AG04449 (cell line): ENCODE measurements at regions of chr1 and their contacts with region 1.

Region 1: GRCh38 chr1:90045853-90046563 is 51.1 kb downstream of the ZNF326 start:
- DNase-seq: no peak
- H3K4me3 ChIP-seq: no peak overlapping the region
- CTCF ChIP-seq: peak; percentile 58

Region 2: DNA sequence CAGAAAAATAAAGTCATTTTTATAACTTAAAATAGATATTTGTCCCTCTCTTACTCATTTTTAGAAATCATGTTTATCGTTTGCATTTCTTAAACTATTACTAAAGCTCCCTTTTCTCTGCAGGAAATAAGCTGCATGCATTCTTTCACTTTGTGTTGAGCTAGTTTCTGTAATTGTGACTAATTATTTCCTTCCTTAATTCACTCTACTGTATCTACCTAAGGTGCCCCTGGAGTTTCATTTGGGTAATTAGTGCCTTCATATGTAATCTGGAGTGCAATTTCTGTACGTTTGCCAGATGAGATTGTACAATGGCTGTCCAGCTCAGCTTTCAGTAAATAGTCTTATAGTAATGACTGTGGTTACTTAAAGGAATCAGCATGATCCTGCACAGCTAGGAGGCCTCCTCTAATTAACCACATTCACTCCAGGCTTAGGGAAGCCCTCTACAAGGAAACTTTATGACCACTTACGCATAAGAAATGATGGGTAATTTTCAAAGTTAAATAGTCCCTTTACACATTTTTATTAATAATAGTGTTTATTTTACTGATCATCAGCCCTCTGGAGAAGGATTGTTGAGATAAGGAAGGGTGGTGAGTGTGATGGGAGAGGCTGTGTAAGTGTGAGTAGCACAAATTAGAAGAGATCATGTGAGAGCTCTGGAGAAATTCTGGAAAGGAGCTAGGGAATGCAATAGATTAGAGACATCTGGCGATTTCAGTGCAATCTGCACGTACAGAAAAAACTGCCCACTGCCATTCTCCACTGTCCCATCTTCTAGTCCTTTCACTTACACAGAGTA is 326.3 kb before region 1 on chr1:
- CTCF ChIA-PET with region 1: no interaction called
- POLR2A ChIA-PET with region 1: no interaction called
- DNase-seq: peak; percentile 24
- H3K4me3 ChIP-seq: peak overlapping the region; percentile 12; the same call in 1 of the 2 replicates
- CTCF ChIP-seq: no peak

Region 3: DNA sequence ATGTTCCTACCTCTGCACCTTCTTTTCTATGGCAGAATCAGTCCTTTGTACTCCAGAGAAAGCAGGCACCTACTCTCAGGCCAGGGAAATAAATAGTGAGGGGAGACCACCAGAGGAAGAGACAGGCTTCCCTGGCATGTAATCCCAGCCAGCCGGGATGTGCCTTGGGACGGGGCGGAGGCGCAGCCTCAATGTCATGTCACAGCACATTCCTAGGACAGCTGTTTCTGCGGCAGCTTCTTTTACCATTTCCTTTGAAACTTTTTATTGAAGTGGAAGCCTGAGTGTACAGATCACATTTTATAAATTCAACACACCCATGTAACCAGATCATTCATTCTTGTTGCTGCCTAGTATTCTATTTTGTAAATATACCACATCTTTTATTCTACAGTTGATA is 119.0 kb before region 1 on chr1:
- CTCF ChIA-PET with region 1: no interaction called
- POLR2A ChIA-PET with region 1: no interaction called
- DNase-seq: no peak
- H3K4me3 ChIP-seq: no peak overlapping the region
- CTCF ChIP-seq: no peak

Region 4: GRCh38 chr1:90027281-90027680 is 18.7 kb before region 1 on chr1:
- CTCF ChIA-PET with region 1: interaction called, 22 read pairs
- POLR2A ChIA-PET with region 1: interaction called, 3 read pairs
- DNase-seq: no peak
- H3K4me3 ChIP-seq: no peak overlapping the region
- CTCF ChIP-seq: no peak

Region 5: DNA sequence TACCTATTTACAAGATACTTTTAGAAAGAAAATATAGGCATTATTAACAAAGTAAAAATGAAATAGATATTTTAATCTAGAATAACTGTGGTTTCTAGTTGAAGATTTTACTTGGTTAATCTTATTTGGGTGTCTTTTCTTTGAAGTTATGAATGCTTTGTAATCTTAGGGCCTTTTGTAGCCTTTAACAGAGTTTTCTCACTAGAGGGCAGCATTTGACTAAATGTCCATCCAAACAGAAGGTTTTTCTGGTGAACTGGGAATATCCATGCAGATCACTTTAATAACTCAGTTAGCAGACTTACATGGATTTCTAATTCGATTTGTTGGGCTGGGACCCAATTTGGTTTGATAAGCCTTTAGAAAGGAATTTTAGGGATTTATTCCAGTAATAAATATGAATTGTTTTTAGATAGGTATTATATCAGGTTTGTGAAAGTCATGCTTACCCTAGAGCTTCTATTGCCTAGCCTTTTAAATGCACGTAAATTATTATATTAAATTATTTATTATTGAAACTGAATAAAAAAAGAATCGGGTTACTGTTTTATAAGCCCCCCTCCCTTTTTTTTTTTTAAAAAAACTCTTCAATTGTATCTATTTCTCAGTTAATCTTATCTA is 68.6 kb after region 1 on chr1:
- CTCF ChIA-PET with region 1: no interaction called
- POLR2A ChIA-PET with region 1: no interaction called
- DNase-seq: peak; percentile 1
- H3K4me3 ChIP-seq: no peak overlapping the region
- CTCF ChIP-seq: peak; percentile 50